Endothelial cell of umbilical vein (primary cell): ENCODE measurements at regions of chr14 and their contacts with region 1.

Region 1: DNA sequence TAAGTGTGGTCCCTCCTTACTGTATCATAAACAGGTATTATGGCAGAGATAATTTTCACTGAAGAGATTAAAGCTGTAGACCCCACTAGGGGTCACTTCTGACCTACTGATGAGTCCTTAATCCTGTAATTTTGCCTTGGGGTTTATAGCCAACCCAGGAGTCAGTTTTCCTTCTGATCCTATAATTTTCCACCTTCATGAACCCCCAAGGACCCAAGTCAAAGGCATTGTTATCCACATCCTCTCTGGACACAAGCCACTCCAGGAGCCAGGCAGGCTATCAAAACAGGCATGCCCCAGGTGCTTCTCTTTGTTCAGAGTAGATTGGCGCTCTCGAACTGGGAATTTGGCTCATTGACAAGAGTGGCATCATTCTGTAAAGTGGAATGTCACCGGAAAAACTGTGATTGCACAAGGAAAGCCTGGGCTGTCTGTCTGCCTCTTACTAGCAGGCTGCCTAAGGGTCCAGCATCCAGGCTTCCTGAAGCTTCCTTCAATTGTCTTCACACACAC is 1523.2 kb upstream of the FLRT2 start:
- DNase-seq: peak; percentile 96
- H3K4me3 ChIP-seq: no peak overlapping the region
- H3K27ac ChIP-seq: peak overlapping the region; percentile 61
- H3K4me1 ChIP-seq: peaks cover 10% of the 10 kb centered on the region
- H3K27me3 ChIP-seq: no peaks in the 10 kb centered on the region
- CTCF ChIP-seq: peak; percentile 10 to 11
- POLR2A ChIP-seq: no peak

Region 2: DNA sequence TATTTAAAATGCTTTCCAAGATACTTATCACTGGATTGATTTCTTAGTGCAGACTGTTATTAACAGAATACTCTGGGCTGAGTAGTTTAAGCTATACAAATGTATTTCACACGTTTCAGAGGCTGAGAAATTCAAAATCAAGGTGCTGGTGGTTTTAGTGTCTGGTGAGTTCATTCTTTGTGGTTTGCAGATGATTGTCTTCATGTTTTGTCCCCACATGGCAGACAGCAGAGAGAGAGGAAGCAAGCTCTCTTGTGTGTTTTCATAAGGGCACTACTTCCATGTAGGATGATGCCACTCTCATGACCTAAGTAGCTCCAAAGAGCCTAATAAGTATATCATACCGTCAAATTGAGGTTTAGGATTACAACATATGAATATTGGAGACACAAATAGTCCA is 174.4 kb after region 1 on chr14:
- CTCF ChIA-PET with region 1: no interaction called
- POLR2A ChIA-PET with region 1: no interaction called
- dilution Hi-C with region 1: no loop called
- intact Hi-C with region 1: no loop called
- DNase-seq: no peak
- H3K4me3 ChIP-seq: no peak overlapping the region
- H3K27ac ChIP-seq: no peak overlapping the region
- H3K4me1 ChIP-seq: no peaks in the 10 kb centered on the region
- H3K27me3 ChIP-seq: no peaks in the 10 kb centered on the region
- CTCF ChIP-seq: no peak
- POLR2A ChIP-seq: no peak

Region 3: GRCh38 chr14:84323978-84324377 is 317.3 kb after region 1 on chr14:
- CTCF ChIA-PET with region 1: no interaction called
- POLR2A ChIA-PET with region 1: no interaction called
- dilution Hi-C with region 1: no loop called
- intact Hi-C with region 1: loop called (anchors 2 kb)
- DNase-seq: peak; percentile 57
- H3K4me3 ChIP-seq: no peak overlapping the region
- H3K27ac ChIP-seq: peak overlapping the region; percentile 64
- H3K4me1 ChIP-seq: peaks cover 16% of the 10 kb centered on the region
- H3K27me3 ChIP-seq: no peaks in the 10 kb centered on the region
- CTCF ChIP-seq: no peak
- POLR2A ChIP-seq: no peak

Region 4: GRCh38 chr14:84622357-84622756 is 615.7 kb after region 1 on chr14:
- CTCF ChIA-PET with region 1: no interaction called
- POLR2A ChIA-PET with region 1: no interaction called
- dilution Hi-C with region 1: no loop called
- intact Hi-C with region 1: loop called (anchors 10 kb)
- DNase-seq: peak; percentile 94
- H3K4me3 ChIP-seq: no peak overlapping the region
- H3K27ac ChIP-seq: no peak overlapping the region
- H3K4me1 ChIP-seq: peaks cover 16% of the 10 kb centered on the region
- H3K27me3 ChIP-seq: no peaks in the 10 kb centered on the region
- CTCF ChIP-seq: no peak
- POLR2A ChIP-seq: no peak

Region 5: GRCh38 chr14:85175556-85175955 is 1168.9 kb after region 1 on chr14:
- CTCF ChIA-PET with region 1: no interaction called
- POLR2A ChIA-PET with region 1: no interaction called
- dilution Hi-C with region 1: no loop called
- intact Hi-C with region 1: loop called (anchors 10 kb)
- DNase-seq: no peak
- H3K4me3 ChIP-seq: no peak overlapping the region
- H3K27ac ChIP-seq: no peak overlapping the region
- H3K4me1 ChIP-seq: no peaks in the 10 kb centered on the region
- H3K27me3 ChIP-seq: no peaks in the 10 kb centered on the region
- CTCF ChIP-seq: no peak
- POLR2A ChIP-seq: no peak

Region 6: DNA sequence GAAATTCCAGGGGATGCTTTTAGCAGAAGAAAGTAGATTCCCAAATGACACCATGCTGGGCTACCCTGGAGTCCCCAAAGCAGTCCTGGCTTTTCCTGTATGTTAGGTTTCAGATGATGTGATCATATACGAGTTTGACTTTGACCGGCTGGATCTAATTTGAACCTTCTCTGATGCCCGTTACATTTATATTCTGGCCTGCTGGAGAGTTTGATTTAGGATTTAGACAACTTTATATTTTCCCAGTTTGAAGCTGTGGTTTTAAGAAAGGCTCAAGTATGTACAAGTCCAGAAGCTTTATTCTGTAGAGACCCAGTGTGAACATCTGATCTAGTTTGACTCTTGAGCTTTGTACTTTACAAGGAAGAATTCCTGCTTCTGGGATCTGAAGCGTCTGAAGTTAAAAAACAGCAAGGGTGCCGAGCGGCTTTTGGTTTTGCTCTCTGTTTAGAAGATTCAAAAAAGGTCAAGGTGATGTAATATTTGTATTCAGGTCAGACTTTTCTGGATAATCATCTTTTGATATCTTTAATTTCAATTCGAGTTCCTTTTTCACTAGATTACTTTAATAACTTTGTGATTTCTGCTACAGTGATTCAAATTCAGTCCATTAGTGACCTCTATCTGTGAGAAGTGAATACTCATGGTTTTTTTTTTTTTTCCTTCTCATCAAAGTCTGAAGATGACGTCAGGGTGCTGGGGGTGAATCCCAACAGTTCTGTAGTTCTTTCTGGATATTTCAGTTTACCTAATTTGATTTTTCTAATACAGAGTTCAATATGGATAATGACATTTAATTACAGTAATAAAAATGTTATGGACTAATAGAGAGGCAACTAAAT is 1529.5 kb after region 1 on chr14:
- CTCF ChIA-PET with region 1: no interaction called
- POLR2A ChIA-PET with region 1: interaction called, 4 read pairs
- dilution Hi-C with region 1: no loop called
- intact Hi-C with region 1: loop called (anchors 1 kb)
- DNase-seq: peak; percentile 80
- H3K4me3 ChIP-seq: peak overlapping the region; percentile 12 to 94 (median 93)
- H3K27ac ChIP-seq: peak overlapping the region; percentile 59
- H3K4me1 ChIP-seq: peaks cover 31% of the 10 kb centered on the region
- H3K27me3 ChIP-seq: no peaks in the 10 kb centered on the region
- CTCF ChIP-seq: peak; percentile 17 to 27
- POLR2A ChIP-seq: no peak